Activated naive CD4-positive, alpha-beta T cell treated with anti-CD3 and anti-CD28 coated beads for 36 hours (primary cell): ENCODE measurements at regions of chr5 and their contacts with region 1.

Region 1: GRCh38 chr5:135887351-135887864 is 8.2 kb downstream of the IL9 start:
- DNase-seq: peak; percentile 77
- H3K4me3 Mint-ChIP-seq: no peak overlapping the region
- H3K27ac Mint-ChIP-seq: no peak overlapping the region
- H3K4me1 Mint-ChIP-seq: peaks cover 4% of the 10 kb centered on the region
- H3K27me3 Mint-ChIP-seq: peaks cover 18% of the 10 kb centered on the region

Region 2: DNA sequence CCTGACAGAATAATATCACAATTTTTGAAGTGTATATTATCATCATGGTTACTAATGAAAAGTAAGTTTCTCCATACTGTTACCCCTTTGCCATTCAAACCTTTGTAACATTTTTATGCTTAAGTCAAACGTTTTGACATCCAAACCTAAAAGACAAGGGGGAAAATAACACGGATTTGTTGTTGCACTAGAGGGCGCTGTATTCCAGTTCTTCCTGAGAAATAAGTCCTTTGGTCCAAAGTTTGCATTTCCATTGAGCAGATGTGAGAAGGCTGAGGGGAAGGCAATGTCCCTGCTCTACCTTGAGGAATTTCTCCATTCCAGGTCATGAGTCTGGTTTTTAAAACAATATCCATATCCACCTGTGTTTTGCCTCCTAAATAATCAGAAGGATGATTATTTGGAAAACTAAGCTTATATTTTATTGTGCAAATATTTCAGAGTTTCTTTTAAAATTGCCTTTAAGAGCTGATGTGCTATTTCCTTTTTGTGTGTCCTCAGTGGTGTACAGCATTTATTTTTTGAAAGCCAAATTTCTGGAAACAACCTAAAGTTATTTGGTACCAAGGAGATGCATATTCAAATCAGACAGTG is 57.7 kb after region 1 on chr5:
- CTCF ChIA-PET with region 1: no interaction called
- intact Hi-C with region 1: loop called (anchors 1 kb)
- DNase-seq: peak; percentile 49
- H3K4me3 Mint-ChIP-seq: no peak overlapping the region
- H3K27ac Mint-ChIP-seq: no peak overlapping the region
- H3K4me1 Mint-ChIP-seq: no peaks in the 10 kb centered on the region
- H3K27me3 Mint-ChIP-seq: peaks cover 10% of the 10 kb centered on the region

Region 3: DNA sequence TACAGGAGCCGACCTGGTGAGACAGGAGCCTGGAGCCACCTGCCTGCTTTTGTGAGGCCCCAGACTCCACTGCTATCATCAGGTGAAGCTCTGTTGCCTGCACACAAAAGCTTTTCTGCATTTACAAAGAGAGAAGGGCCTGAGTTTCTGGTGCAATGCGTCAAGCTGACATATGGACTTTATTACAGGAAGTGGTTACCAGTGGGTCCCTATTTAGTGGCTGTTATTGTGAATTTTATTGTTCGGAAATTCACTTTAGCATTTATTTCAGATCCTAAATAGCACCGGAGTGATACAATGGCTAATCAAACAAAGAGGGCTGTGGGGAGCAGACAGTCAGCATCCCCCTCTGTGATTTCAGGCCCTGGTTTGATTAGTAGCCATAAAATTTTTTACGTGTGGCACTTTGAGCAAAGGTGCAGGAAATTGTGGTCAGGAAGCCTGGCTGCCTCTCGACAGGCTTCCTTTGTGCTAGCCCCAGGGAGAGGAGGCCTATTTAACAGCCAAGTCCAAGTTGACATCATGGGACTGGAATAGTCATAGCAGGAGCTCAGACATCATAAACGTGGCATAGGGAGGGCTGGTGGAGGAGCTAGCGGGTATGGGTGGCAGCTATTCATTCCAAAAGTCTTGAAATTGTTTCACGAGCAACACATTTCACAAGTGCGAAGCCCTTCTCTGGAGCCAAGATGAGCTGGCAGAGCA is 149.7 kb after region 1 on chr5:
- CTCF ChIA-PET with region 1: no interaction called
- intact Hi-C with region 1: loop called (anchors 1 kb)
- DNase-seq: peak; percentile 65
- H3K4me3 Mint-ChIP-seq: no peak overlapping the region
- H3K27ac Mint-ChIP-seq: no peak overlapping the region
- H3K4me1 Mint-ChIP-seq: peaks cover 18% of the 10 kb centered on the region
- H3K27me3 Mint-ChIP-seq: no peaks in the 10 kb centered on the region

Region 4: DNA sequence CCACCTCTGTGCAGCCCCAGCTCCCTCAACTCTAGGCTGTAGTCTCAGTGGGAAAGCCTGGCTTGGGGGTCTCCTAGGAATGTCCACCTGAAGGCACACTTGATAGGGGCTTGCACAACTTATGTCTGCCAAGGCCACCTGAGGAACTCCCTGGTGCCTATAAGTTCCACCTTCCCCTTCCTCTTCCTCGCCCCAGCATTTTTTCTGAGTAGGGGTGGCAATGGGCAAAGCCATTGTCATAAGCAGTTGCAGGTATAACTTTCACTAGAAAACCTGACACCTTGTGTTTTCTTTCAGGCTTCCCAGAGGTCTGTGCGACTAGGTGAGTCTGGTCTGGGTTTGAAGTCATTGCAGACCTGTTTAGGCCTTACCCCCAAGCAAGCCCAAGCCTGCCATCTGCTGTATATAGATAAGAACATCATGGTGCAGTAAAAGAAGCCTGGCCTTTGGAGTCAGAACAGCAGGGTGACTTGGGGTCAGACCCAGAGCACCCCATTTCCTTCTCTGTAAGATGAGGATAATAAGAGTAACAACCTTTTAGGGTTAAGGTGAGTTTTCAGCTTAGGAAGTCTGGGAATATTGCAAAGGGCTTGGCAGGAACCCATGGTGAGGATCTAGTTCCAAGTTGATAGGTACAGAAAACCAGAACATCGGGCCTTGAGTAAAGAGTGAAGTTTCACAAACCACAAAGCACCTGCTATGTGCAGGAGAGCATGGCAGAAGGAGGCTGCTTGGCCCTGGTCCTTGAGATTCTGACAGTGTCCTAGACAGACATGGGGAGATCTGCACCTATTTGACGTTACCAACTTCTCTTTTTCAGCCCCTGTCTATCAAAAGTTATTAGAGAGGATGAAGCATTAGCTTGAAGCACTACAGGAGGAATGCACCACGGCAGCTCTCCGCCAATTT is 175.2 kb after region 1 on chr5:
- CTCF ChIA-PET with region 1: no interaction called
- intact Hi-C with region 1: loop called (anchors 1 kb)
- DNase-seq: peak; percentile 17
- H3K4me3 Mint-ChIP-seq: no peak overlapping the region
- H3K27ac Mint-ChIP-seq: no peak overlapping the region
- H3K4me1 Mint-ChIP-seq: no peaks in the 10 kb centered on the region
- H3K27me3 Mint-ChIP-seq: no peaks in the 10 kb centered on the region

Region 5: DNA sequence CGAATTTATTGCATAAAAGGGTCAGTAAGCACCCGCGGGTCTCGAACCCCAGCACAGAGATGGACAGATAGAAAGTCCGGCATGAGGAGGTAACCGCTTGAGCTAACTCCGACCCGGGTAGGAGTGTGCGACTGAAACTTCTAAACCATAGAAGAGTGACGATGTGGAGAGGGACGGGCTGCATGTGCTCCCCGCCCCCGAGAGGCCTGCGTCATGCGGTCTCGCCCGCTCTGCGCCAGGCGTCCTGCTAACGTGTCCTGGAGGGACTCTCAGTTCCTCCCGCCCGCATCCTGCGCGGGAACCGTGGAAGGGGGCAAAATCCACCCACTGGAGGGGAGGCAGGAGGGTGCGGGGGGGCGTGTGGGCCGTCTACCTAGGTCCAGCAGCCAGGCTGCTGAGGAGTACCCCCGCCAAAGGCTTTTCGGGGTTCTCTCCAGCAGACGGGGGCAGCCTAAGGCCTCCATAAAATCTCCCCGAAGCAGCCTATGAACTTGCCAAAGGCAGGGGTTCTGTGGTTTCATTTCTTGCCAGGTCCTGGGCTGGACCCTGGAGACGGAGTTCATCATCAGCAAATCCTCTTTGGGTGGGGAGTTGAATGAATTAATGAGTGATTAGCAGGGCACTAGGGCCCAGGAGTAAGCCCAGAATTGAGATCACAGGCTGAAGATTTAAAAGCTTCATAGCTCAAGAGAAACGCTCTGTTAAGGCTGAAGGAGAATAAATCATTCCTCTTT is 193.2 kb after region 1 on chr5:
- CTCF ChIA-PET with region 1: interaction called, 4 read pairs
- intact Hi-C with region 1: loop called (anchors 1 kb)
- DNase-seq: peak; percentile 62
- H3K4me3 Mint-ChIP-seq: peak overlapping the region; percentile 12
- H3K27ac Mint-ChIP-seq: no peak overlapping the region
- H3K4me1 Mint-ChIP-seq: peaks cover 2% of the 10 kb centered on the region
- H3K27me3 Mint-ChIP-seq: peaks cover 23% of the 10 kb centered on the region

Region 6: DNA sequence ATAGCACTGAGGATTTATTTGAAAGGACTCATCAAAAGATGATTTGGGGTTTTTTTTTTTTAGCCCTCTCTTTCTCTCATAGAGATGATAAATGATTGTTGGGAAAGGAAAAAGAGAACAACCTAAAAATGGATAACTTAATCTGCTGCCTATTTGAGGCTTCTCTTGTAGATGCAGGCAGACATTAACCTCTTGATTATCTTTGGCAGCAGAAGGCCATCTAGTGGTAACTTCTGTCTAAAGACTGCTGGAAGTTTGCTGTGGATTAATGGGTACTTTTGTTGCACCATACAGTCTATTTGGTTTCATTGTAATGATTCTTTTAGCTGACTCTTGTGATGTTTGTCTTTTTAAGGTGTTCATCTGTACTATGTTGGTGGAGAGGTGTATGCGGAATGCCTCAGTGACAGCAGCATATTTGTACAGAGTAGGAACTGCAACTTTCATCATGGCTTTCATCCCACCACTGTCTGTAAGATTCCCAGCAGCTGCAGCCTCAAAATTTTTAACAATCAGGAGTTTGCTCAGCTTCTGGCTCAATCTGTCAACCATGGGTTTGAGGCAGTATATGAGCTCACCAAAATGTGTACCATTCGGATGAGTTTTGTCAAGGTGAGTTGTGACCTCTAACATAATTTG is 286.7 kb after region 1 on chr5:
- CTCF ChIA-PET with region 1: no interaction called
- intact Hi-C with region 1: loop called (anchors 1 kb)
- DNase-seq: no peak
- H3K4me3 Mint-ChIP-seq: no peak overlapping the region
- H3K27ac Mint-ChIP-seq: no peak overlapping the region
- H3K4me1 Mint-ChIP-seq: no peaks in the 10 kb centered on the region
- H3K27me3 Mint-ChIP-seq: peaks cover 4% of the 10 kb centered on the region

Region 7: DNA sequence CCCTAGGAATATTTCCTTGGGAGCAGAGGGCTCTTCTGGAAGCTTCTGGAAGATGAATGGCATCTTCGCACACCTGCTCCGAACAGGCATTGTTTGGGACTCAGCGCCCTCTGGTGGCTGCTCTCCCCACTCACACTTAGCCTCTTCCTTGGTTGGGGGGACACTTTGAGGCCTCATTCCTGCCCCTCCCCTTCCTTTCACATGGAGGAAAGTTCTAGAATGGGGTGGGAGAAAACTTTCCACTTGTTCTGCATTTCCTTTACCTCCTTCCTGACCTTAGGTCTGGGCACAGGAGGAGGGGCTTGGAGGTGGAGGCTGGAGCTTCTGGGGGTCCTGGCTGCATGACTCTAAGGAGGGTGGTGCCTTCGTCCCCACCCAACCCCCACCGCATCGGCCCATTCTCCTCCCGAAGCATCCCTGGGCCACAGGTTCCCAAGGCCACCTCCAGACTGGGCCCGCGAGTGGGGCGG is 324.9 kb after region 1 on chr5:
- CTCF ChIA-PET with region 1: interaction called, 12 read pairs
- intact Hi-C with region 1: loop called (anchors 1 kb)
- DNase-seq: peak; percentile 55
- H3K4me3 Mint-ChIP-seq: no peak overlapping the region
- H3K27ac Mint-ChIP-seq: no peak overlapping the region
- H3K4me1 Mint-ChIP-seq: no peaks in the 10 kb centered on the region
- H3K27me3 Mint-ChIP-seq: peaks cover 8% of the 10 kb centered on the region

Region 8: DNA sequence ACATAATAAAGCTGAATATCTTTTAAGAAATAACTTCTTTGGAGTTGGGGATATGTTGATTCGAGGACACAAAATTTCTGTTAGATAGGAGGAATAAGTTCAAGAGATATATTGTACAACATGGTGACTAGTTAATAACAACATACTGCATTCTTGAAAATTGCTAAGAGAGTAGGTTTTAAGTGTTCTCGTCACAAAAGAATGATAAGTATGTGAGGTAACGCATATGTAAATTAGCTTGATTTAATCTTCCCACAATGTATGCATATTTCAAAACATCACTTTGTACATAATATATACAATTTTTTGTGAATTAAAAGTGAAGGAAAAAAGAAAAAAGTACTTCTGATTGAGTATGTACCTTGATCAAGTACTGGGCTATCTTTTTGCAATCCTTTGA is 905.9 kb after region 1 on chr5:
- CTCF ChIA-PET with region 1: no interaction called
- intact Hi-C with region 1: no loop called
- DNase-seq: no peak
- H3K4me3 Mint-ChIP-seq: no peak overlapping the region
- H3K27ac Mint-ChIP-seq: no peak overlapping the region
- H3K4me1 Mint-ChIP-seq: no peaks in the 10 kb centered on the region
- H3K27me3 Mint-ChIP-seq: no peaks in the 10 kb centered on the region